Dendritic cell treated with granulocyte-macrophage colony-stimulating factor and Interleukin-4, amounts not matched to agents 40 ng/mL and 50 ng/mL, for 4 days (primary cell): ENCODE measurements at regions of chr6 and their contacts with region 1.

Region 1: GRCh38 chr6:26520853-26521599 is 17.1 kb upstream of the HMGN4 start:
- H3K4me3 Mint-ChIP-seq: peak overlapping the region; percentile 84
- H3K27ac Mint-ChIP-seq: peak overlapping the region; percentile 98
- H3K4me1 Mint-ChIP-seq: peaks cover 42% of the 10 kb centered on the region
- H3K27me3 Mint-ChIP-seq: no peaks in the 10 kb centered on the region

Region 2: GRCh38 chr6:26322645-26323482 is 198.2 kb before region 1 on chr6:
- intact Hi-C with region 1: no loop called
- H3K4me3 Mint-ChIP-seq: peak overlapping the region; percentile 78
- H3K27ac Mint-ChIP-seq: peak overlapping the region; percentile 81
- H3K4me1 Mint-ChIP-seq: peaks cover 31% of the 10 kb centered on the region
- H3K27me3 Mint-ChIP-seq: peaks cover 77% of the 10 kb centered on the region

Region 3: GRCh38 chr6:26475823-26476729 is 45.0 kb before region 1 on chr6:
- intact Hi-C with region 1: loop called (anchors 5 kb)
- H3K4me3 Mint-ChIP-seq: peak overlapping the region; percentile 67
- H3K27ac Mint-ChIP-seq: peak overlapping the region; percentile 89
- H3K4me1 Mint-ChIP-seq: peaks cover 87% of the 10 kb centered on the region
- H3K27me3 Mint-ChIP-seq: no peaks in the 10 kb centered on the region

Region 4: DNA sequence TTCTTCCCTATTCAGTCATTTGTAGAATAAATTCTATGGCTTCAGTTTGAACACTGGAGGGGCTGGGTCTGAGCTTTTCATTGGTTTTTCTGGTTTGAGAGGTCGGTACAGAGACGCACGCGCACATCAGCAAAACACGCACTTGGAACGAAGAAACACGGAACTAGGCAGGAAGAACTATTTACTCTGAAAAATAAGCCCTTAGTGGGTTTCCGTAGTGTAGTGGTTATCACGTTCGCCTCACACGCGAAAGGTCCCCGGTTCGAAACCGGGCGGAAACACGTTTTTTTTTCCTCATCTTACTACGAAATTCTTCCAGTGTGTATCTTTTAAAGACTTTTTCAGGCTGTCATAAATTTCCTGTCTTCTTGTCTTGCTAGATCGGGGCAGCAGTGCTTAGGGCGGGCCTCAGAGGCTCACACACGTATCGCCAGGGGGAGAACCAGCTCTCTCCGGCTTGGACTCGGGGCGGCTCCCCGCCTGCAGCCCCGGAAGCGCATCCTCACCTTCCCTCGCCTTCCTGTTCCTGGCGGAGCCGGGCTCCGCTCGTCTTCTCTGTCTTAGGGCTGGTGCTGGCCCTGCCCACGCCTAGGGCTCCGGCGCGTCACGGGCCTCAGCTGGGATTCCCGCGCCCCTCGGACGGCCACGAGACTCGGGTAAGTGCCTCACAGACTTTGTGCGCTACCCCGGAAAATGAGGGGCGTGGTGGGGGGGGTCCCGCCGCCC is 17.0 kb after region 1 on chr6 and contains the start of gene HMGN4:
- intact Hi-C with region 1: loop called (anchors 2 kb)
- H3K4me3 Mint-ChIP-seq: peak within 1 kb of the TSS; percentile 84
- H3K27ac Mint-ChIP-seq: peak within 1 kb of the TSS; percentile 94
- H3K4me1 Mint-ChIP-seq: peaks cover 54% of the 10 kb centered on the region
- H3K27me3 Mint-ChIP-seq: no peaks in the 10 kb centered on the region